Activated B cell treated with CpG ODN at 0.5 μM for 24 hours (primary cell): ENCODE measurements at regions of chr10 and their contacts with region 1.

Region 1: DNA sequence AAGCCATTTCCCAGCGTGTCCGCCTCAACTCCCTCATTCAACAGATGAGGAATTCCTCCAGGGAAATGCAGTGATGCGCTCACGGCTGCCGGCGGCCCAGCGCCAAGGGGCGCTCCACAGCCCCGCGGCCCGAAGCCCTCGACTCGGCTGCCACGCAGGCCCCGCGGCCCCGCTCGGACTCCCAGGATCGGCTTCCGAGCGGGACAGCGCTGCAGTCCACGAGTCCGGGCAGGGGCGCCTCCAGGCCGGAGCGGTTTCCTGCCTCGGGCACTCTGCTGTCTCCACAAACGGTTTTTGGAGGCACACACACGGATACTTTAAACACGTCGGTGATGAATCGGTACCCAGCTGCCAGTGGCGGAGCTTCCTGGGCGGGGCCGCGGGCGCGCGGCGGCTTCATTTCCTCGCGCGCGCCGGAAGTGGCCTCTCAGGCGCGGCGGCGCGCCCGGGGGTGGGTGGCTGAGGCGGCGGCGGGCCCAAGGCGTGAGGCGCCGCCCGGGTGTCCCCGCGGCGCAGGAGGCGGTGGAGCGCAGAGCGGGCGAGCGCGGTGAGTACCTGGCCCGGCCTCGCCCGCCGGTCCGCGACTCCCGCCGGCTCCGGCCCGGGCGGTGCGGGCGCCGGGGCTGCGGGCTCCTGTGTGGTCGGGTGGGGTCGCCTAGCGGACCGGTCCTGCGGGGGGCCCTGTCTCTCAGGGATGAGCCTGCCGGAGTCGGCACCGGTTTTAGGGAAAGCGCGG is at the start of gene CSGALNACT2:
- DNase-seq: peak; percentile 92
- ATAC-seq: peak; percentile 81
- H3K4me3 Mint-ChIP-seq: peak within 1 kb of the TSS; percentile 95
- H3K27ac Mint-ChIP-seq: peak within 1 kb of the TSS; percentile 96
- H3K4me1 Mint-ChIP-seq: peaks cover 58% of the 10 kb centered on the region
- H3K27me3 Mint-ChIP-seq: no peaks in the 10 kb centered on the region
- CTCF ChIP-seq: no peak
- total RNA-seq, gene CSGALNACT2: 15.2 and 17.4 TPM in 2 replicates

Region 2: GRCh38 chr10:42782446-42783180 is 355.6 kb before region 1 on chr10 and contains the start of gene BMS1:
- CTCF ChIA-PET with region 1: no interaction called
- POLR2A ChIA-PET with region 1: no interaction called
- intact Hi-C with region 1: loop called (anchors 1 kb)
- DNase-seq: peak; percentile 84
- ATAC-seq: peak; percentile 88
- H3K4me3 Mint-ChIP-seq: peak within 1 kb of the TSS; percentile 98
- H3K27ac Mint-ChIP-seq: peak within 1 kb of the TSS; percentile 89
- H3K4me1 Mint-ChIP-seq: peaks cover 21% of the 10 kb centered on the region
- H3K27me3 Mint-ChIP-seq: peaks cover 7% of the 10 kb centered on the region
- CTCF ChIP-seq: no peak
- total RNA-seq, gene BMS1: 24.6 and 25.1 TPM in 2 replicates

Region 3: GRCh38 chr10:43160046-43160918 is 22.1 kb after region 1 on chr10:
- CTCF ChIA-PET with region 1: interaction called, 3 read pairs
- POLR2A ChIA-PET with region 1: interaction called, 5 read pairs
- intact Hi-C with region 1: loop called (anchors 1 kb)
- DNase-seq: no peak
- ATAC-seq: peak; percentile 85
- H3K4me3 Mint-ChIP-seq: no peak overlapping the region
- H3K27ac Mint-ChIP-seq: peak overlapping the region; percentile 65
- H3K4me1 Mint-ChIP-seq: peaks cover 28% of the 10 kb centered on the region
- H3K27me3 Mint-ChIP-seq: no peaks in the 10 kb centered on the region
- CTCF ChIP-seq: no peak

Region 4: DNA sequence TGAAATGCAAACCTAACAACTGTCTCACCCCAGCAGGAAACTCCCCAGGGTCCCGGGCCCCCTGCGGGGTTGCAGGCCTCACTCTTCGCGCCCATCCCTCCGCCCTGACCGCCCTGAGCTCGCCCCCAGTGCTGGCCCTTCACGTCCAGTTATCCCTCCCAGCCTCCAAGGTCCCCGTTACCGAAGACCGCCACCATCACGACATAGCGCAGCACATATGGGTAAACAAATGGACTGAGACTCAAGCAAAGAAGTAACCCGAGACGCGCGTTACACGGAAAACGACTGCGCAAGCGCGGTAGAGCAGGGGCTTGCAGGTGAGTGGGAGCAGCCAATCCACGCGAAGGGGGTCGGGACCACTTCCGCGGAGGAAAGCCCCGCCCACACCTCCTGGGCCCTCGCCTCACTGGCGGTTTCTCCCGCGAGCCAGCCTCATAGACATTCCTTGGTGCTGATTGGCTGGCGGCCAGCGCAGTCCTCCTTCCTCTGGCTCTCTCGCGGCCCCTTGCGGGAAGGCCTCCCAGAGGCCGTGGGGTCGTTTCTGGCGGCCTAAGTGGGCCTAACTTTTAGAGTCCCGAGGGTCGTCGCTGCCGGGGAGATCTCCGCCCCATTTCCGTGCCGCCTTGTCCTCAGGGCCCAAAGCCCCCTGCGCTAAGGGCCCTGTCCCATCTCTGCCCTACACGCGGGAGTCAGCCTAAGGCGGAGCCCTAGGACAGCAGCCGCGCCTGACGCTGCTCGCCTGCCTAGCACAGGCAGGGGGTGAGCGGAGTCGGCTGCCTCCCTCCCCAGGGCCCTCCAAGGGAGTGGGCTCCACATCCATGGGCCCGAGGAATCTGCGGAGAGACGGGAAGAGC is 224.0 kb after region 1 on chr10:
- CTCF ChIA-PET with region 1: no interaction called
- POLR2A ChIA-PET with region 1: interaction called, 3 read pairs
- intact Hi-C with region 1: loop called (anchors 1 kb)
- DNase-seq: peak; percentile 86
- ATAC-seq: peak; percentile 98
- H3K4me3 Mint-ChIP-seq: peak overlapping the region; percentile 97
- H3K27ac Mint-ChIP-seq: peak overlapping the region; percentile 93
- H3K4me1 Mint-ChIP-seq: peaks cover 23% of the 10 kb centered on the region
- H3K27me3 Mint-ChIP-seq: no peaks in the 10 kb centered on the region
- CTCF ChIP-seq: no peak

Region 5: GRCh38 chr10:43461950-43462349 is 323.8 kb after region 1 on chr10:
- CTCF ChIA-PET with region 1: no interaction called
- POLR2A ChIA-PET with region 1: no interaction called
- intact Hi-C with region 1: loop called (anchors 2 kb)
- DNase-seq: no peak
- ATAC-seq: peak; percentile 62
- H3K4me3 Mint-ChIP-seq: no peak overlapping the region
- H3K27ac Mint-ChIP-seq: no peak overlapping the region
- H3K4me1 Mint-ChIP-seq: peaks cover 4% of the 10 kb centered on the region
- H3K27me3 Mint-ChIP-seq: no peaks in the 10 kb centered on the region
- CTCF ChIP-seq: peak; percentile 36